CD14-positive monocyte (primary cell): ENCODE measurements at regions of chr6 and their contacts with region 1.

Region 1: DNA sequence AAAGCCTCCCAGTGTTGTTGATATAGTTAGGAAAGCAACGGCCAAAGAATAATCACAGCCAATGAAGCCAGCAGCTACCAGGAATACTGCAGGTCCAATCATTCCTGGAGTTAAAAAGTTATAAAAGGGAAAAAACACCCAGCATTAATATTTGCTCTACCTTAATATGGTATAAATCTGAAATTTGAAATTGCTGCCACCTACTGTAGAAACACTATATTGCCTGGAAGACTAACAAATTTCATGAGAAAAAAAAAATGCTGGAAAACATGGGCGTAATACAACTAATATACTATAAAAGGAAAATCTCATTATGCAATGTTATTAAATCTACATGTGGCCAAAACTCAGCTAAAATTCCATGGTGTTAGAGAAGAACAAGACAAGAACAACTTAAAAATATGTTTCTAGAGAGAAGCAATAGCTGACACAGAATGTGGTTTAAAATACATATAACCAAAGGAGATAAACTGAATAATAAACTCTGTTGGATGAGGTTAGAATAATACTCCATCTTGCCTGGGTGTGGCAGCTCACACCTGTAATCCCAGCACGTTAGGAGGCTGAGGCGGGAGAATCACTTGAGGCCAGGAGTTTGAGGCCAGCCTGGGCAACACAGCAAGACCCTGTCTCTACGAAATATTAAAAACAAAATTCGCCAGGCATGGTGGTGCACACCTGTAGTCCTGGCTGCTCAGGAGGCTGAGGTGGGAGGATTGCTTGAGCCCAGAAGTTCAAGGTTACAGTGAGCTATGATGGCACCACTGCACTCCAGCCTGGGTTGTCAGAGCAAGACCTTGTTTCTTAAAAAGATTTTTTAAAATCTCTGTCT is 43.1 kb downstream of the SLC17A5 start:
- DNase-seq: peak; percentile 32 to 70 (median 41)
- H3K4me3 ChIP-seq: no peak overlapping the region
- H3K4me3 Mint-ChIP-seq: no peak overlapping the region
- H3K27ac ChIP-seq: no peak overlapping the region
- H3K27ac Mint-ChIP-seq: peak overlapping the region in 5 of 7 donors; percentile 47 to 89 (median 78)
- H3K4me1 ChIP-seq: no peaks in the 10 kb centered on the region
- H3K4me1 Mint-ChIP-seq: no peaks in the 10 kb centered on the region
- H3K27me3 ChIP-seq: no peaks in the 10 kb centered on the region
- H3K27me3 Mint-ChIP-seq: no peaks in the 10 kb centered on the region
- CTCF ChIP-seq: peak; percentile 76

Region 2: DNA sequence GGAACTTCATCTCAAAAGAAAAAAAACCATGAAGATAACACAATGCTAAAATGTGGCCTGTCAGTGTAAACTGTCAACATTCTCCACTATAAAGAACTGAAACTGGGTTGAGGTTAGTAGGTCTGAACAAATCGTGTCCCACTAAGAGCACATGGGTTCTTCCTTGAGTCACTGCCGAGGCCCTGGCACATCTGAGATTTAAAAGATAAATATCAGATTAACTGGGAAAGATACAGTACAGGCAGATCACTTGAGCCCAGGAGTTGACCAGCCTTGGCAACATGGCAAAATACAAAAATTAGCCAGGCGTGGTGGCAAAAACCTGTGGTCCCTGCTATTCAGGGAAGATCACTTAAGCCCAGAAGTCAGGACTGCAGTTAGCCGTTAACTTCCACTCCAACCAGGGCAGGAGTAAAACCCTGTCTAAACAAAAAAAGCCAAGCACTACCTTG is 95.4 kb before region 1 on chr6:
- intact Hi-C with region 1: loop called (anchors 2 to 5 kb)
- DNase-seq: peak; percentile 33 to 48 (median 39)
- H3K4me3 ChIP-seq: peak overlapping the region in 1 of 3 experiments; percentile 1
- H3K4me3 Mint-ChIP-seq: no peak overlapping the region
- H3K27ac ChIP-seq: peak overlapping the region in 1 of 2 donors; percentile 44
- H3K27ac Mint-ChIP-seq: peak overlapping the region; percentile 68 to 90 (median 86)
- H3K4me1 ChIP-seq: peaks cover 50 to 62% of the 10 kb centered on the region in 2 donors
- H3K4me1 Mint-ChIP-seq: peaks cover 57% of the 10 kb centered on the region
- H3K27me3 ChIP-seq: no peaks in the 10 kb centered on the region
- H3K27me3 Mint-ChIP-seq: peaks cover 0 to 2% (median 0%) of the 10 kb centered on the region in 3 donors
- CTCF ChIP-seq: no peak

Region 3: GRCh38 chr6:73566954-73567591 is 43.6 kb before region 1 on chr6:
- intact Hi-C with region 1: loop called (anchors 5 kb)
- DNase-seq: peak; percentile 75 to 89 (median 87)
- H3K4me3 ChIP-seq: peak overlapping the region in 1 of 3 experiments; percentile 34
- H3K4me3 Mint-ChIP-seq: peak overlapping the region in 1 of 2 donors; percentile 68
- H3K27ac ChIP-seq: peak overlapping the region; percentile 60 to 83
- H3K27ac Mint-ChIP-seq: peak overlapping the region; percentile 79 to 95 (median 90)
- H3K4me1 ChIP-seq: peaks cover 22 to 30% of the 10 kb centered on the region in 2 donors
- H3K4me1 Mint-ChIP-seq: peaks cover 21% of the 10 kb centered on the region
- H3K27me3 ChIP-seq: no peaks in the 10 kb centered on the region
- H3K27me3 Mint-ChIP-seq: peaks cover 0 to 5% (median 0%) of the 10 kb centered on the region in 3 donors
- CTCF ChIP-seq: no peak

Region 4: GRCh38 chr6:73752943-73753342 is 142.3 kb after region 1 on chr6:
- intact Hi-C with region 1: no loop called
- DNase-seq: no peak
- H3K4me3 ChIP-seq: no peak overlapping the region
- H3K4me3 Mint-ChIP-seq: no peak overlapping the region
- H3K27ac ChIP-seq: no peak overlapping the region
- H3K27ac Mint-ChIP-seq: no peak overlapping the region
- H3K4me1 ChIP-seq: peaks cover 0 to 7% of the 10 kb centered on the region in 2 donors
- H3K4me1 Mint-ChIP-seq: no peaks in the 10 kb centered on the region
- H3K27me3 ChIP-seq: no peaks in the 10 kb centered on the region
- H3K27me3 Mint-ChIP-seq: no peaks in the 10 kb centered on the region
- CTCF ChIP-seq: no peak